CD14-positive monocyte (primary cell): ENCODE measurements at regions of chr15 and their contacts with region 1.

Region 1: GRCh38 chr15:50686468-50687301 is at the start of gene TRPM7:
- DNase-seq: peak; percentile 89 to 94 (median 92)
- H3K4me3 ChIP-seq: peak within 1 kb of the TSS; percentile 72 to 95 (median 94)
- H3K4me3 Mint-ChIP-seq: peak within 1 kb of the TSS; percentile 98 to 99
- H3K27ac ChIP-seq: peak within 1 kb of the TSS; percentile 92 to 98
- H3K27ac Mint-ChIP-seq: peak within 1 kb of the TSS; percentile 94 to 99 (median 99)
- H3K4me1 ChIP-seq: peaks cover 20 to 35% of the 10 kb centered on the region in 2 donors
- H3K4me1 Mint-ChIP-seq: peaks cover 44% of the 10 kb centered on the region
- H3K27me3 ChIP-seq: no peaks in the 10 kb centered on the region
- H3K27me3 Mint-ChIP-seq: peaks cover 0 to 2% (median 0%) of the 10 kb centered on the region in 3 donors
- CTCF ChIP-seq: no peak
- polyA plus RNA-seq, gene TRPM7: 5.5 to 22.4 (median 8.1) TPM

Region 2: GRCh38 chr15:50278496-50278895 is 408.2 kb before region 1 on chr15:
- intact Hi-C with region 1: no loop called
- DNase-seq: peak; percentile 21 to 57 (median 33)
- H3K4me3 ChIP-seq: peak overlapping the region in 1 of 3 experiments; percentile 44
- H3K4me3 Mint-ChIP-seq: peak overlapping the region in 1 of 2 donors; percentile 59
- H3K27ac ChIP-seq: peak overlapping the region in 1 of 2 donors; percentile 66
- H3K27ac Mint-ChIP-seq: peak overlapping the region; percentile 50 to 89 (median 85)
- H3K4me1 ChIP-seq: peaks cover 17 to 32% of the 10 kb centered on the region in 2 donors
- H3K4me1 Mint-ChIP-seq: peaks cover 28% of the 10 kb centered on the region
- H3K27me3 ChIP-seq: no peaks in the 10 kb centered on the region
- H3K27me3 Mint-ChIP-seq: peaks cover 0 to 1% (median 0%) of the 10 kb centered on the region in 3 donors
- CTCF ChIP-seq: no peak

Region 3: DNA sequence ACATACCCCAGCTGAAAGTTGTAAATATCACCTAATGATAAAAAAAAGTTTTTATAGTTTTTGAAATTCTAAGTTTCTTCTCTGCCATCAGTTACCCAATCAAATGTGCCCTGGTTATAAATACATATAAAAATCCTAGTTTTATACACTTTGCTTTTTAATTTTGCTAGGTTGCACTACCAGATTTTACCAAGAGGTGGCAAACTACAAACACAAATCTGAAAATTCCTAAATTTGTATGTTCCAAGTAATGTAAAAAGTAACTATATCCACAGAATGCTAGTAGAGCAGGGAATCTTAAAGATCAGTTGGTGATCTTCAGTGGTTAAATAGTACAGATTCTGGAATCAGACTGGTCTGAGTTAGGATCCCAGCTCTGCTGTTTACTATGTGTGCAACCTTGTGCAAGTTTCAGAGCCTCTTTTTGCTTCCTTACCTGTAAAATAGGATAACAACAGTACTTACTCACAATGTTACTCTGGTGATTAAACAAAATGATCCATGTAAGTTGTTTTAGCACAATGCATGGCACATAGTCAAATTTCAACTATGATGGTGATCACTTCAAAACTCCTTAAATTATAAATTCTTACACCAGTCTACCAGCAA is 11.0 kb before region 1 on chr15:
- intact Hi-C with region 1: no loop called
- DNase-seq: peak; percentile 8 to 21 (median 13)
- H3K4me3 ChIP-seq: no peak overlapping the region
- H3K4me3 Mint-ChIP-seq: no peak overlapping the region
- H3K27ac ChIP-seq: peak overlapping the region in 1 of 2 donors; percentile 47
- H3K27ac Mint-ChIP-seq: no peak overlapping the region
- H3K4me1 ChIP-seq: no peaks in the 10 kb centered on the region
- H3K4me1 Mint-ChIP-seq: peaks cover 6% of the 10 kb centered on the region
- H3K27me3 ChIP-seq: no peaks in the 10 kb centered on the region
- H3K27me3 Mint-ChIP-seq: no peaks in the 10 kb centered on the region
- CTCF ChIP-seq: peak; percentile 94

Region 4: GRCh38 chr15:50765195-50765973 is 78.7 kb after region 1 on chr15 and contains the start of gene SPPL2A:
- intact Hi-C with region 1: loop called (anchors 2 to 10 kb)
- DNase-seq: peak; percentile 81 to 87 (median 83)
- H3K4me3 ChIP-seq: peak within 1 kb of the TSS; percentile 82 to 91 (median 89)
- H3K4me3 Mint-ChIP-seq: peak within 1 kb of the TSS; percentile 89 to 94
- H3K27ac ChIP-seq: peak within 1 kb of the TSS; percentile 87 to 98
- H3K27ac Mint-ChIP-seq: peak within 1 kb of the TSS; percentile 90 to 98 (median 97)
- H3K4me1 ChIP-seq: peaks cover 24 to 34% of the 10 kb centered on the region in 2 donors
- H3K4me1 Mint-ChIP-seq: peaks cover 36% of the 10 kb centered on the region
- H3K27me3 ChIP-seq: no peaks in the 10 kb centered on the region
- H3K27me3 Mint-ChIP-seq: peaks cover 1 to 8% (median 7%) of the 10 kb centered on the region in 3 donors
- CTCF ChIP-seq: no peak
- polyA plus RNA-seq, gene SPPL2A: 111 to 204 (median 190) TPM

Region 5: GRCh38 chr15:51726351-51727073 is 1039.8 kb after region 1 on chr15:
- intact Hi-C with region 1: no loop called
- DNase-seq: peak in 2 of 3 donors; percentile 8 to 38
- H3K4me3 ChIP-seq: no peak overlapping the region
- H3K4me3 Mint-ChIP-seq: no peak overlapping the region
- H3K27ac ChIP-seq: no peak overlapping the region
- H3K27ac Mint-ChIP-seq: peak overlapping the region in 1 of 7 donors; percentile 70
- H3K4me1 ChIP-seq: peaks cover 16% of the 10 kb centered on the region in 2 donors
- H3K4me1 Mint-ChIP-seq: peaks cover 35% of the 10 kb centered on the region
- H3K27me3 ChIP-seq: no peaks in the 10 kb centered on the region
- H3K27me3 Mint-ChIP-seq: peaks cover 0 to 2% (median 0%) of the 10 kb centered on the region in 3 donors
- CTCF ChIP-seq: no peak